WTC11 (cell line): ENCODE measurements at regions of chr4 and their contacts with region 1.

Region 1: GRCh38 chr4:155953151-155954114 is at the start of gene CTSO:
- DNase-seq: peak; percentile 60
- ATAC-seq: peak; percentile 94
- H3K4me3 Mint-ChIP-seq: peak within 1 kb of the TSS; percentile 95
- H3K27ac Mint-ChIP-seq: peak within 1 kb of the TSS; percentile 90
- H3K4me1 Mint-ChIP-seq: peaks cover 3% of the 10 kb centered on the region; the same call in 1 of the 2 replicates
- H3K27me3 Mint-ChIP-seq: peaks cover 7% of the 10 kb centered on the region
- CTCF ChIP-seq: peak; percentile 40; the same call in 1 of the 2 replicates
- total RNA-seq, gene CTSO: 1.1 to 1.3 TPM (median 1.2 TPM) in 3 replicates

Region 2: GRCh38 chr4:155809835-155810234 is 143.6 kb before region 1 on chr4:
- CTCF ChIA-PET with region 1: interaction called, 36 read pairs
- POLR2A ChIA-PET with region 1: interaction called, 3 read pairs
- DNase-seq: no peak
- ATAC-seq: peak; percentile 80
- H3K4me3 Mint-ChIP-seq: no peak overlapping the region
- H3K27ac Mint-ChIP-seq: no peak overlapping the region
- H3K4me1 Mint-ChIP-seq: peaks cover 4% of the 10 kb centered on the region; the same call in 1 of the 2 replicates
- H3K27me3 Mint-ChIP-seq: no peaks in the 10 kb centered on the region
- CTCF ChIP-seq: peak; percentile 31

Region 3: GRCh38 chr4:155819066-155819465 is 134.4 kb before region 1 on chr4:
- CTCF ChIA-PET with region 1: interaction called, 11 read pairs
- POLR2A ChIA-PET with region 1: no interaction called
- DNase-seq: no peak
- ATAC-seq: no peak
- H3K4me3 Mint-ChIP-seq: no peak overlapping the region
- H3K27ac Mint-ChIP-seq: no peak overlapping the region
- H3K4me1 Mint-ChIP-seq: peaks cover 20% of the 10 kb centered on the region
- H3K27me3 Mint-ChIP-seq: 0 out of 2 replicates have a peak, but pooled peaks cover 3% of the 10 kb centered on the region
- CTCF ChIP-seq: no peak

Region 4: GRCh38 chr4:155972098-155972497 is 18.7 kb after region 1 on chr4:
- CTCF ChIA-PET with region 1: interaction called, 10 read pairs
- POLR2A ChIA-PET with region 1: no interaction called
- DNase-seq: peak; percentile 16
- ATAC-seq: peak; percentile 95
- H3K4me3 Mint-ChIP-seq: no peak overlapping the region
- H3K27ac Mint-ChIP-seq: no peak overlapping the region
- H3K4me1 Mint-ChIP-seq: peaks cover 27% of the 10 kb centered on the region
- H3K27me3 Mint-ChIP-seq: no peaks in the 10 kb centered on the region; the same call in 1 of the 2 replicates
- CTCF ChIP-seq: no peak

Region 5: GRCh38 chr4:156378033-156378665 is 424.7 kb after region 1 on chr4:
- CTCF ChIA-PET with region 1: no interaction called
- POLR2A ChIA-PET with region 1: no interaction called
- DNase-seq: peak; percentile 26
- ATAC-seq: peak; percentile 95
- H3K4me3 Mint-ChIP-seq: no peak overlapping the region
- H3K27ac Mint-ChIP-seq: no peak overlapping the region
- H3K4me1 Mint-ChIP-seq: peaks cover 17% of the 10 kb centered on the region
- H3K27me3 Mint-ChIP-seq: no peaks in the 10 kb centered on the region
- CTCF ChIP-seq: peak; percentile 57